Dorsolateral prefrontal cortex (tissue), 120 donors: ENCODE measurements at regions of chr16 and their contacts with region 1.

Region 1: GRCh38 chr16:28211712-28212534 is at the start of gene XPO6:
- DNase-seq: peak; percentile 92 to 97 (median 96)
- H3K4me3 ChIP-seq: peak within 1 kb of the TSS; percentile 44 to 95 (median 83)
- H3K27ac ChIP-seq: peak within 1 kb of the TSS; percentile 50 to 95 (median 87)
- H3K27me3 ChIP-seq: no peaks in the 10 kb centered on the region
- CTCF ChIP-seq: peak in 21 of 56 donors; percentile 8 to 51 (median 25)
- total RNA-seq, gene XPO6: 111 to 213 (median 156) TPM

Region 2: DNA sequence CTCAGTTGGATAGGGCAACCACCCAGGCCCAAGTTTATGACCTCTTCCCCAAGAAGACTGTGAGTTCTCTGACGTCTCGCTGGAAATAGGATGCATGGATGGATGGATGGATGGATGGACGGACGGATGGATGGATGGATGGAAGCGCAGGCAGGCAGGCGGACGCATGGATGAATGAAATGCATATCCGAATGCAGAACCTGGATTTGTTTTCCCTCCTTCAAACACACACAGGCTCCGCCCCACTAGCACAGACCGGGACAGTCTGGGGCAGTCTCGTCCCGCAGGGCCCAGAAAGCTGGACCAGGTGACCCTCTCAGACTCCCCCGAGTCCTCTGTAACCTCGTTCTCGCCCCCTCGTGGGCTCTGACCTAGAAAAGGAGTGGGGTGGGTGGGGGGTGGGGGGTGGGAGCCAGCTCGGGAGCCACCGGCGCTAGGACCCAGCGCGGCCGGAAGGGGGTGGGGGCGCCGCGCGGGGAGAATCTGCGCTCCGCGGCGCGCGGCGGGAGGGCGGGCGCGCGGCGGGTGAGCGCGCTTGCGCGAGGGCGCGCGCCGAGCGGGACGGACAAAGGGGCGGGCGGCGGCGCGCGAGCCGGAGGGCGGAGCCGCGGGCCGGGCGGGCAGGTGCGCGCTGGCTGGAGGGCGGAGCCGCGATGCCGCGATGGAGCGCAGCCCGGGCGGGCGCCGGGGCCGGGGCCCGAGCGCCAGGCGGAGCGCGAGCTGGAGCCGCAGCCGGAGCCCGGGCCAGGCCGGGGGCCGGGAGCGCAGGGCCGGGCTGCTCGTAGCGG is 80.1 kb after region 1 on chr16 and contains the start of gene SBK1:
- intact Hi-C with region 1: loop called in 1 of 2 experiments (anchors 5 kb)
- DNase-seq: peak; percentile 46 to 85 (median 63)
- H3K4me3 ChIP-seq: peak within 1 kb of the TSS; percentile 54 to 85 (median 76)
- H3K27ac ChIP-seq: peak within 1 kb of the TSS in 51 of 59 donors; percentile 19 to 89 (median 70)
- H3K27me3 ChIP-seq: no peaks in the 10 kb centered on the region
- CTCF ChIP-seq: no peak
- total RNA-seq, gene SBK1: 7.4 to 32.7 (median 21.4) TPM

Region 3: DNA sequence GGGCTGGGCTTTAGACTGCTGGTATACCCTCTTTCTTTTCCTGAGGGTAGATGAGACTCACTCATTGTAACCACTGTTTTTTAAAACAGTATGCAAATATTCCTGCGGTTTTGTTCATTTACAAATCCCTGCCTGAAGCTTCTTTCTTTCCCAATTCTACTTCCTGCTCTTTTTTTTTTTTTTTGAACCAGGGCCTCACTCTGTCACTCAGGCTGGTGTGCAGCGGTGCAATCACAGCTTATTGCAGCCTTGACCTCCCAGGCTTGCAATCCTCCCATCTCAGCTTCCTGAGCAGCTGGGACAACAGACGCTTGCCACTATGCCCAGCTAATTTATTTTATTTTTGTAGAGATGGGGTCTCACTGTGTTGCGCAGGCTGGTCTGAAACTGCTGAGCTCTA is 406.0 kb after region 1 on chr16:
- intact Hi-C with region 1: no loop called
- DNase-seq: no peak
- H3K4me3 ChIP-seq: no peak overlapping the region
- H3K27ac ChIP-seq: no peak overlapping the region
- H3K27me3 ChIP-seq: no peaks in the 10 kb centered on the region
- CTCF ChIP-seq: no peak